ENCODE measurements at regions of chrX and their contacts with region 1.

Region 1: GRCh38 chrX:118345401-118346257 is at the start of gene WDR44:
- DNase-seq: peak; percentile 91
- H3K4me3 Mint-ChIP-seq: peak within 1 kb of the TSS; percentile 98
- H3K27ac Mint-ChIP-seq: peak within 1 kb of the TSS; percentile 98
- H3K4me1 Mint-ChIP-seq: peaks cover 27% of the 10 kb centered on the region
- H3K27me3 Mint-ChIP-seq: no peaks in the 10 kb centered on the region
- total RNA-seq, gene WDR44: 10.0 and 12.9 TPM in 2 replicates

Region 2: GRCh38 chrX:118254611-118255010 is 91.0 kb before region 1 on chrX:
- intact Hi-C with region 1: no loop called
- DNase-seq: peak; percentile 8
- H3K4me3 Mint-ChIP-seq: no peak overlapping the region
- H3K27ac Mint-ChIP-seq: no peak overlapping the region
- H3K4me1 Mint-ChIP-seq: peaks cover 2% of the 10 kb centered on the region
- H3K27me3 Mint-ChIP-seq: peaks cover 2% of the 10 kb centered on the region

Region 3: DNA sequence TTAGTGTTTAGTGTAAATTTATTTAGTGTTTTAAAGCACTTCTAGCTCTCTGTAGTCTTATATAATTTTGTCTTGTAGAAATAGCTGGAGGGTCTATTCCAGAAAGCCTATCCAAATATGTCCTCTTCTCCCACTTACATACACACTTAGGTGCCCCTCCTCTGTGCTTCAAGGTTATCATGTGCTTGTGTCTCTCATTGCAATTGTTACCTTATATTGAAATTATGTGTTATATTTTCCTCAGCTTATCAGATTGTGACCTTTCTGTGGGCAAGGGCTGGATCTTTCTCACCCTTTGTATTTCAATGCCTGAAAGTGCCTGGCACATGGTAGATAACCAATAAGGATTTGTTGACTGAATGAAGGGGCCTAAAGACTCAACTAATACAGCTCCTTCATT is 18.6 kb after region 1 on chrX:
- intact Hi-C with region 1: loop called (anchors 2 kb)
- DNase-seq: no peak
- H3K4me3 Mint-ChIP-seq: no peak overlapping the region
- H3K27ac Mint-ChIP-seq: no peak overlapping the region
- H3K4me1 Mint-ChIP-seq: peaks cover 11% of the 10 kb centered on the region
- H3K27me3 Mint-ChIP-seq: no peaks in the 10 kb centered on the region

Region 4: GRCh38 chrX:118392716-118393115 is 47.1 kb after region 1 on chrX:
- intact Hi-C with region 1: loop called (anchors 5 kb)
- DNase-seq: no peak
- H3K4me3 Mint-ChIP-seq: no peak overlapping the region
- H3K27ac Mint-ChIP-seq: no peak overlapping the region
- H3K4me1 Mint-ChIP-seq: peaks cover 15% of the 10 kb centered on the region
- H3K27me3 Mint-ChIP-seq: no peaks in the 10 kb centered on the region

Region 5: GRCh38 chrX:118420462-118420861 is 74.8 kb after region 1 on chrX:
- intact Hi-C with region 1: loop called (anchors 5 kb)
- DNase-seq: no peak
- H3K4me3 Mint-ChIP-seq: no peak overlapping the region
- H3K27ac Mint-ChIP-seq: no peak overlapping the region
- H3K4me1 Mint-ChIP-seq: peaks cover 11% of the 10 kb centered on the region
- H3K27me3 Mint-ChIP-seq: no peaks in the 10 kb centered on the region

Region 6: DNA sequence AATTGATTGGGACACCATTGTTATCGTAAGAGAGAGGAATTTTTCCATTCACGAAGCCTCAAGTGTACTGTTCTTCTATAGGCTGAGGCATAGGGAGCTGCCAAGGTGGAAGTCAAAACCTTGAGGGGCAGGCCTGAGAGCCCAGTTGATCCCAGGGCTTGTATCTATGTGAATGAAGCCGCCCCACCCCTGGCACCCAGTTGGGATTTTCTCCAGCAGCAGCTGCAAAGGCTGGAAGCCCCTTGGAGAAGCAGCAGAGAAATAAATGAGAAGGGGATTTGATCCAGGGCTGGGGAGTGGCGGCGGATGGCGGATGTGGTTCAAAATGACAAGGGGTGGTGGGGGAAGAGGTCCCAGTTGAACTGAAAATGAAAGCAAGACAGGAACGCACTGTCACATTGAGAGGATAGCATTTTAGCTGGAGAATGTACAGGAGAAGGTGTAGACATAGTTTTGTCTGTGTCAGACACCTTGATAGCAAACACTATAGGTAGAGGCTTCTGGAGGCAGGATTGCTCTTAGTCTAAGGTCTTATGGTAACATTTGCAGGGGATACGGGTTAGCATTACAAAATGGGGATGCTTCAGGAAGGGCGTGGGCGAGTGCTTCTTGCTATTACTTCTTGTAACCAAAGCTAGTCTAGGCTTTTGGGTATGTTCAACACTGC is 182.6 kb after region 1 on chrX:
- intact Hi-C with region 1: loop called (anchors 2 kb)
- DNase-seq: peak; percentile 51
- H3K4me3 Mint-ChIP-seq: peak overlapping the region; percentile 91
- H3K27ac Mint-ChIP-seq: peak overlapping the region; percentile 98
- H3K4me1 Mint-ChIP-seq: peaks cover 51% of the 10 kb centered on the region
- H3K27me3 Mint-ChIP-seq: no peaks in the 10 kb centered on the region

Region 7: DNA sequence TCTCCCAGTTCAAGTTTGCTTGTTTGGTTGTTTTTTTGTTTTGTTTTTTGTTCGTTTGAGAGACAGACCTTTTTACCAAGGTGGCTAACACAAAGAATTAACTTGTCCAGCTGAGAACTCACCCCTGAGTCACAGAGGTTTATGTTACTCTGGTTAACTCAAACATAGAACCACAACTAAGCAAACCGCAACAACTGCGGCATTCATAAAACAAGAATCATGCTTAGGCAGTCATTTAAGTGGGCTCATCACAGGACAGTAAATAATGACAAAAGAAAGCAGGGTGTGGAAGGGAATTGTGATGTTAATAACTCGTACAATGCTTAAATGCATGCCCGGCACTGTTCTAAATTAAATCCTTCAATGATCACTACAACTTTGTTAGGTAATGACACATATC is 357.1 kb after region 1 on chrX:
- intact Hi-C with region 1: no loop called
- DNase-seq: no peak
- H3K4me3 Mint-ChIP-seq: no peak overlapping the region
- H3K27ac Mint-ChIP-seq: no peak overlapping the region
- H3K4me1 Mint-ChIP-seq: no peaks in the 10 kb centered on the region
- H3K27me3 Mint-ChIP-seq: no peaks in the 10 kb centered on the region